Activated CD8-positive, alpha-beta T cell treated with anti-CD3 and anti-CD28 coated beads for 36 hours (primary cell): ENCODE measurements at regions of chr12 and their contacts with region 1.

Region 1: DNA sequence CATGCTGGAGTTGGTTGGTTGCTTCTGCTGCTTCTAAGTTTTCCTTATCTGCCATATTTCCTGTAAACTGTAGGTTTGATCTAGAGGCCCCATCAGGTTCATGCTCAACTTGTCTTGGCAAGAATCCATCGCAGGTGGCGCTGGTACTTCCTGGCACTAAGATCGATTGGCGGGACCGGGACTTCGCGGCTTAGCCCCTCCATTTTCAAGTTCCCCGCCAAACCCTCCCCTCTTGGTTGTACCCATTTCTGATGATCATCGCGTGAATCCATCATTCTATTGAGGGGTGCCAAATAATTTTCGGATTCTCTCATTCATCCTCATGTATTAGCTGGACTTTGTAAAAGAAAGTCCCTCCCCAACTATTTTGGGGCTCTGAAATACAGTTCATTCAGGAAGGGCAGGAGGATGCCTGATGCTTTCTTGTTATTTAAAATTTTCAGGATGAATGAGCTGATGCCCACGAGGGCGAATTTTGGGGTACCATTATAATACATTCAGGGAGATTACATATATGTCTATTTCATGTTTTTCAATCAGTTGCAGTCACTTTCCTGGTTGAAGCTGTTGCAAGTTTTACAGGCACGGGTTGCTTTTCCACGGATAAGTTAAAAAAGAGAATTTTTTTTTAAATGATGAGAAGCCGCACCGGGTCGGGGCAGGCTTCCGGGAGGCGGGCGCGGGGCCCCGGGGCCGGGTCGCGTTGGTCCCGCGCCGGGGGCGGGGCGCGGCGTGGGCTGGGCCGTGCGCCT is 395 bp upstream of the BRI3BP start:
- DNase-seq: peak; percentile 97
- ATAC-seq: peak; percentile 58
- H3K4me3 Mint-ChIP-seq: peak overlapping the region; percentile 76
- H3K27ac Mint-ChIP-seq: peak overlapping the region; percentile 92
- H3K4me1 Mint-ChIP-seq: peaks cover 23% of the 10 kb centered on the region
- H3K27me3 Mint-ChIP-seq: no peaks in the 10 kb centered on the region
- CTCF ChIP-seq: peak; percentile 67

Region 2: GRCh38 chr12:125049093-125049458 is 56.0 kb after region 1 on chr12:
- CTCF ChIA-PET with region 1: interaction called, 3 read pairs
- POLR2A ChIA-PET with region 1: interaction called, 3 read pairs
- intact Hi-C with region 1: loop called (anchors 5 kb)
- DNase-seq: no peak
- ATAC-seq: no peak
- H3K4me3 Mint-ChIP-seq: peak overlapping the region; percentile 80
- H3K27ac Mint-ChIP-seq: peak overlapping the region; percentile 63
- H3K4me1 Mint-ChIP-seq: peaks cover 5% of the 10 kb centered on the region
- H3K27me3 Mint-ChIP-seq: no peaks in the 10 kb centered on the region
- CTCF ChIP-seq: no peak

Region 3: DNA sequence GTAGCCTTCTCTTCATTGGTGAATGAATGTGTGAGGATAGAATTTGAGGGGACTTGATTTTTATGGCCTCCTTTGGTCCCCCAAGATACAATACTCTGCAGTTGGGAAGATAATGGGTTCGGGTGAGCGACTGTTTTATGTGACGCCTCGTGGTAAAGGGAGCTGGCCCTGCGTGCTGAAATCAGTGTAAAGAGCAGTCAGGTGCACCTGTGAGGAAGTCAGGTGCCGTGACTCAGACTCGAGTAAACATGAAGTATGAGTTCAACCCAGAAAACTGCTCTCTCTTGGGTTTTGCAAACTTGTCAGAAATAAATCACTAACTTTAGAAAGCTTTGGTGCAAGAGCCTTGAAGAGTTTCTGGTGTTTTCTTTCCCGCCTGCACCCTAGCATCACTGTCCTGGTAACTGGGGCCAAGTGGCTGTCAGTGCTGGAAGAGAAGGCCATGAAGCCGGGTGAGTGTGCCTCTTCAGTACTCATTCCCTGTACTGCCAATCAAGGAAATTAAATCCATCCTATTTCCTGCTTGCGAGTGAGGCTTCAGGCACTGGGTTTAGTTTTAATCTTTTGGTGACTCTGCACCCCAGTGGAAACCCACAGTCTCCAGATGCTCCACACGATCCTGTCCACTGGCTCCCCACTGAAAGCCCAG is 131.4 kb after region 1 on chr12:
- CTCF ChIA-PET with region 1: no interaction called
- POLR2A ChIA-PET with region 1: no interaction called
- intact Hi-C with region 1: no loop called
- DNase-seq: no peak
- ATAC-seq: no peak
- H3K4me3 Mint-ChIP-seq: no peak overlapping the region
- H3K27ac Mint-ChIP-seq: no peak overlapping the region
- H3K4me1 Mint-ChIP-seq: no peaks in the 10 kb centered on the region
- H3K27me3 Mint-ChIP-seq: no peaks in the 10 kb centered on the region
- CTCF ChIP-seq: no peak